ENCODE measurements at regions of chr4 and their contacts with region 1.

Region 1: DNA sequence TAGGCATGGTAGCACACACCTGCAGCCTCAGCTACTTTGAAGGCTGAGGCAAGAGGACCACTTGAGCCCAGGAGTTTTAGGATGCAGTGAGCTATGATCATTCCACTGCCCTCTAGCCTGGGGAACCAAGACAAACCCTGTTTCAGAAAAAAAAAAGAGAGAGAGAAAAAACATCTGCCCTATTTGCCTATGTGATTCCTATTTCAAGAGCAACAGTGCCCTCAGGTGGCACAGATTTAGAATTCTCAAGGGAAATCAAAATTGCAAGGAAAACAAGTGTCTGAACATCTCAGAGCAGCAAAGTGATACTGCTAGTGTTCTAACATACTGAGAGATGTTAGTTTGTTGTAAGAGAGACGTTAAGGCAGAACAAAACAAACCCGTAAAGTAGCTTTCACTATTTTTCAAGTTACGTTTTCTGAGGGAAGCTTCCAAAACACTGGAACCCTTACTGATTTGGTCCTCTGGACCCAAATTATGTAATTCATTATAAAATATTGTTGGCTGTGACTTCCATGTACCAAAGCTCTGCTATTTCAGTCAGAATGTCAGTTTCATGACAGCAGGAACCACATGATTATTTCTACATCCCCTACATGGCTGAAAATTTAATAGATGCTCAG is 7.9 kb downstream of the BDH2 start:
- DNase-seq: peak; percentile 68
- ATAC-seq: peak; percentile 79
- H3K4me3 Mint-ChIP-seq: peak overlapping the region; percentile 74
- H3K27ac Mint-ChIP-seq: peak overlapping the region; percentile 85
- H3K4me1 Mint-ChIP-seq: peaks cover 33% of the 10 kb centered on the region
- H3K27me3 Mint-ChIP-seq: no peaks in the 10 kb centered on the region

Region 2: GRCh38 chr4:102826890-102827673 is 264.6 kb before region 1 on chr4 and contains the start of gene UBE2D3:
- CTCF ChIA-PET with region 1: interaction called, 10 read pairs
- DNase-seq: peak; percentile 97
- ATAC-seq: peak; percentile 52
- H3K4me3 Mint-ChIP-seq: no peak within 1 kb of the TSS
- H3K27ac Mint-ChIP-seq: no peak within 1 kb of the TSS
- H3K4me1 Mint-ChIP-seq: peaks cover 36% of the 10 kb centered on the region
- H3K27me3 Mint-ChIP-seq: no peaks in the 10 kb centered on the region
- total RNA-seq, gene UBE2D3: 357 to 421 TPM

Region 3: DNA sequence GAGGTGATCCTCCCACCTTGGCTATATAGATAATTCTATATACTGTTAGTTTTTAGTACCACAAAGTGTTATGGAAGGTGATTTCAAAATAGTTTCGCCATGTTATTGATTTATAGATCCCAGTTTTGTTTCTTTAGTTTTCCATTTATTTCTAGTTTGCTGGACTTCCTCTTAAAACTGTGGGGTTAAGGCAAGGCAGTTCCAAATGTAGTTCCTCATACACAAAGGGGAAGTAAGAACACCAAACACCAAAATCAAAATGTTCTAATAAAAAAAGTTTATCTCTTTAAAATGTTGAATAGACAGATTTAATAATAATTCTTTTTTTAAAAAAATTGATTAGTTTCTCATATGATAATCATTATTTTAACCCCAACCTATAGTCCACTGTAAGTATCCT is 229.7 kb before region 1 on chr4:
- CTCF ChIA-PET with region 1: no interaction called
- DNase-seq: no peak
- ATAC-seq: no peak
- H3K4me3 Mint-ChIP-seq: no peak overlapping the region
- H3K27ac Mint-ChIP-seq: no peak overlapping the region
- H3K4me1 Mint-ChIP-seq: peaks cover 29% of the 10 kb centered on the region
- H3K27me3 Mint-ChIP-seq: no peaks in the 10 kb centered on the region

Region 4: DNA sequence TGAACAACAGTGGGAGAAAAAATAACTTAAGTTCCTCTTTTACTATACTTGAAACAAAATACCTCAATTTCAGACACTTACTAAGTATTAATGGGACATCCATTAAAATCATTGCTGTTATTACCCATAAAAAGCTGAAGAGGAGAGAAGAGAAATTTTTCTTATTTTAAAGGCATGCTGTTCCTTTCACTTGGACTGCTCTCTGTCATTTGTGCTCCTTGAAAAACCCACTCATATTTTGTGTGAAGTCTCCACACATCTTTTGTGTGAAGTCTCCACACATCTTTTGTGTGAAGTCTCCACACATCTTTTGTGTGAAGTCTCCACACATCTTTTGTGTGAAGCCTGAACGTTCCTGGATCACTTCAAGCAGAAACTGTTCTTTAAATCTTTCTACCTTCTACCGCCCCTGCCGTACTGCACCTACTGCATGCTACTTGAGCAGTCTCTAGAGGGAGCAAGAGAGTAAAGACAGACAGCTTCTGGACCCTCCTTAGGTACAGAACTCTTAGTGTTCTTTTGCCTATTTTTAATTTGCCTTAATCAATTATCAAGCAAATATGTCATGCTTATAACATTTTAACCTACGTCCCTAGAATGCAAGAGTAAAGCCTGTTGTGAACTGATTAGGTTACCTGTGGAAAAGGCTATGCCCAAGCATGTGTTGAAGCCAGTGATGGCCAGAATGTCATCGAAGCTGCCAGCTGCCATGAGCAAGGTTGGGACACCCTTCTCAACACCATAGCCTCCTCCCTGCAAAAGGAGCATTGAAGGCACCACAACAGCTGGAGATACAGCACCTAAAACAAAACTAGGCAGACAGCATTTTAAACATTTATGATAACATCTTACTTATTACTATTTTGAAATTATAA is 45.1 kb before region 1 on chr4:
- CTCF ChIA-PET with region 1: interaction called, 25 read pairs
- DNase-seq: peak; percentile 58
- ATAC-seq: peak; percentile 97
- H3K4me3 Mint-ChIP-seq: no peak overlapping the region
- H3K27ac Mint-ChIP-seq: peak overlapping the region; percentile 41
- H3K4me1 Mint-ChIP-seq: peaks cover 15% of the 10 kb centered on the region
- H3K27me3 Mint-ChIP-seq: no peaks in the 10 kb centered on the region

Region 5: GRCh38 chr4:103075901-103076739 is 15.6 kb before region 1 on chr4:
- CTCF ChIA-PET with region 1: interaction called, 76 read pairs
- DNase-seq: peak; percentile 76
- ATAC-seq: peak; percentile 79
- H3K4me3 Mint-ChIP-seq: peak overlapping the region; percentile 95
- H3K27ac Mint-ChIP-seq: peak overlapping the region; percentile 99
- H3K4me1 Mint-ChIP-seq: peaks cover 48% of the 10 kb centered on the region
- H3K27me3 Mint-ChIP-seq: no peaks in the 10 kb centered on the region

Measured in activated CD8-positive, alpha-beta memory T cell treated with anti-CD3 and anti-CD28 coated beads, Interleukin-2, amount 10 ng/mL, durations not matched to agents 7 days and 5 days (primary cell).